Activated CD4-positive, alpha-beta memory T cell treated with anti-CD3 and anti-CD28 coated beads, Interleukin-2, amount 10 ng/mL, durations not matched to agents 7 days and 5 days (primary cell): ENCODE measurements at regions of chr3 and their contacts with region 1.

Region 1: DNA sequence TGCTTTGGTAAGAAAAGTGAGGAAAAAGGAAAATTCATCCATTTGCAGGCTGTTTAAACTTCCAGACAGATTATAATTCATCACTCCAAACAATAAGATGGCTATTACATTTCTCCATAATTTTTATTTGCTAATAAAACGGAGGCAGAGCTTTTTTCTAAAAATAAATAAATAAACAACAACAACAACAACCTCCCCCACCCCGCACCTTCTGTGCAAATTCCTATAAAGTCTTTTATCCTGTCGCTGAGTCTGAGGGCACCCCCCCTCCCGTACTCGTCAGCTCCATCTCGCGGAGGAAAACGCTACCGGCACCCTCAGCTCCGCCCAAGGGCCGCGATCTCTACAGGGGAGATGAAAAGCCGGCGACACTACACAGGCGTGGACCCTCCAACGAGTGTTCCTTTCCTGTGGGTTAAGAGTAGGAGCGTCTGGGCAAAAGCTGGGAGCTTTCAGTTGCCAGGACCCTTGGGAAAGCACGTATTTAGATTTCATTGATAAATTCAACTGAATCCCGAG is 1.0 kb upstream of the ATP1B3 start:
- DNase-seq: peak; percentile 86
- H3K4me3 Mint-ChIP-seq: peak overlapping the region; percentile 84
- H3K27ac Mint-ChIP-seq: peak overlapping the region; percentile 90
- H3K4me1 Mint-ChIP-seq: peaks cover 37% of the 10 kb centered on the region
- H3K27me3 Mint-ChIP-seq: no peaks in the 10 kb centered on the region

Region 2: GRCh38 chr3:141680620-141681389 is 194.6 kb before region 1 on chr3:
- CTCF ChIA-PET with region 1: no interaction called
- POLR2A ChIA-PET with region 1: no interaction called
- DNase-seq: no peak
- H3K4me3 Mint-ChIP-seq: no peak overlapping the region
- H3K27ac Mint-ChIP-seq: no peak overlapping the region
- H3K4me1 Mint-ChIP-seq: peaks cover 14% of the 10 kb centered on the region
- H3K27me3 Mint-ChIP-seq: peaks cover 1% of the 10 kb centered on the region

Region 3: GRCh38 chr3:141796081-141796888 is 79.1 kb before region 1 on chr3:
- CTCF ChIA-PET with region 1: interaction called, 28 read pairs
- POLR2A ChIA-PET with region 1: interaction called, 33 read pairs
- DNase-seq: peak; percentile 80
- H3K4me3 Mint-ChIP-seq: peak overlapping the region; percentile 84
- H3K27ac Mint-ChIP-seq: peak overlapping the region; percentile 97
- H3K4me1 Mint-ChIP-seq: peaks cover 46% of the 10 kb centered on the region
- H3K27me3 Mint-ChIP-seq: peaks cover 3% of the 10 kb centered on the region

Region 4: DNA sequence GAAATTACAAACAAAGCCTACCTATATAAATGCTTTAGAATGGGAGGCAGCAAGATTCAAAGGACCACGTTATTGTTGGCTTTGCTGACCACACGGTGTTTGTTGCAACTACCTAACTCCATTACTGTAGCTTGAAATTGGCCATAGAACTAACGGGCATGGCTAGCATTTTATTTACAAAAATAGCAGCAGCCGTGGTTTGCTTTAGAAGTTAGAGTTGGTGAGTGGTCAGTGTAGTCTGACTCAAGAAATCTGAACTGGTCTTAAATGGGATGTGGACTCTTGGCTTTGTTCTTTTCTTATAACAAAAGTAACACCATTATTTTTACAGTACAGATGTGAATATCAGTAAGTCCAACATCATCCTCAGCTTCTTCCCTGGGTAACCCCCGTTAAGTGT is 11.6 kb after region 1 on chr3:
- CTCF ChIA-PET with region 1: interaction called, 24 read pairs
- POLR2A ChIA-PET with region 1: interaction called, 8 read pairs
- DNase-seq: no peak
- H3K4me3 Mint-ChIP-seq: no peak overlapping the region
- H3K27ac Mint-ChIP-seq: no peak overlapping the region
- H3K4me1 Mint-ChIP-seq: peaks cover 32% of the 10 kb centered on the region
- H3K27me3 Mint-ChIP-seq: no peaks in the 10 kb centered on the region

Region 5: DNA sequence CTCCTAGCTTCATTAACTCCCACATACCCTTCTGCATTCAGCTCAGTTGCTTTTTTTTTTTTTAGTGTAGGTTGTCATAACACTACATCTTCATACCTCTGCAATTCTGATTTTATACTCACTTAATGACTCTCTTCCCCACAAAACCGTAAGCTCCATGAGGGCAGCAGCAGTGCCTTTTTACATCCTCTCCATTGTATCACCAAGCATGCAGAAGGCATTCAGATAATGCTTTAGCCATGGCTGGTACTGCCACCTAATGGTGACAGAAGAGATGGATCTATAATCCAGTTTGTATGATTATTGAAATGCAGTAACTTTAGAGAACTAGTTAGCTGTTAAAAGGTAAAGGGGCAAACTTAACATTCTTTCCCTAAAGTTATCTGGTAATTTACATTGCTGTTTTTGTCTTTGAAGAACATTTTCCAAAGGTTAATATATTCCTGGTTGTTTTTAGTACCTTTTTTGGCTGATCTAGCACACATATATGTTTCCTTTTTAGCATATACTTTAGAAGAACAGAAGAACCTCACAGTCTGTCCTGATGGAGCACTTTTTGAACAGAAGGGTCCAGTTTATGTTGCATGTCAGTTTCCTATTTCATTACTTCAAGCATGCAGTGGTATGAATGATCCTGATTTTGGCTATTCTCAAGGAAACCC is 37.8 kb after region 1 on chr3:
- CTCF ChIA-PET with region 1: interaction called, 10 read pairs
- POLR2A ChIA-PET with region 1: interaction called, 5 read pairs
- DNase-seq: peak; percentile 58
- H3K4me3 Mint-ChIP-seq: no peak overlapping the region
- H3K27ac Mint-ChIP-seq: no peak overlapping the region
- H3K4me1 Mint-ChIP-seq: peaks cover 4% of the 10 kb centered on the region
- H3K27me3 Mint-ChIP-seq: no peaks in the 10 kb centered on the region